IMR-90 (cell line): ENCODE measurements at regions of chr4 and their contacts with region 1.

Region 1: DNA sequence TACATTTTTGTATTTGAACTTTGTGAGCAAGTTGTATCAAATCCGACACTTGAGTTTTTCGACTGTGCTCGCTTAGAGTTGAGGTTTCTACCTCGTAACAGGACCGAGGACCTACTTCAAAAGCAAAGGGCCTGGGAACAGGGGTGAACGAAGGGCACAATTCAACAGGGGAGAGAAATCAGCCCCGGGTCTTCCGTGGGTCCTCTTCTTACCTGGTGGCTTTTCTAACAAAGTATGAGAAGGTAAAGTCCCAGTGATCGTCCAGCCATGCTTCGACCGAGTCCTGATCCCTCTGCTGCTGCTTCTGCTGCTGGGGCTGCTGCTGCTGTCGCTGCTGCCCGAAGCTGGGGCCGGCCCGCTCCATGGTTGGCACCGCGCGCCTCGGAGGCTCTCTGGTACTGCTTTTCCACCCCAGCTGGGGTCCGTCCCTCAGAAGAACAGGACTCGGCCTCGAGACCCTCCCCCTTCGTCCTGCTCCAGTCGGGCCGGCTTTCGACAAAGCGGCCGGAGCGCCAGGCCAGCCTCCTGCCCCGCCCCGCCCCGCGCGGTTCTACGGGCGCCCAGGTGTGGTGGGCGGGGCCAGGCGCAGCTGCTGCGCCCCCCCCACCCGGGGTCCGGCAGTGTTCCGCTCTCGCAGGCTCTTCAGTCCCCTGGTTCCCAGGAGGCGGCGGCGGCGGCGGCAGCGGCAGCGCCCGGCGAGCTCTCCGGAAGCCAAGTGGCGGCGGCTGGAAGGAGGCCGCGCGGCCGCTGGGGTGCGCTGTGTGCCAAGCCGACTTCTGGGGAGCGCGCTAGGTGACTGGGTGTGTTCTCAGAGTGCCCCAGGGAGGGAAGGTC is at the start of gene PDE5A:
- DNase-seq: peak; percentile 80
- ATAC-seq: peak; percentile 56
- H3K4me3 ChIP-seq: peak within 1 kb of the TSS; percentile 93
- H3K27ac ChIP-seq: peak within 1 kb of the TSS; percentile 96
- H3K4me1 ChIP-seq: peaks cover 11% of the 10 kb centered on the region
- H3K27me3 ChIP-seq: no peaks in the 10 kb centered on the region
- CTCF ChIP-seq: peak; percentile 80
- POLR2A ChIP-seq: no peak
- RAD21 ChIP-seq: peak; percentile 90
- total RNA-seq, gene PDE5A: 567 and 770 TPM in 2 replicates

Region 2: DNA sequence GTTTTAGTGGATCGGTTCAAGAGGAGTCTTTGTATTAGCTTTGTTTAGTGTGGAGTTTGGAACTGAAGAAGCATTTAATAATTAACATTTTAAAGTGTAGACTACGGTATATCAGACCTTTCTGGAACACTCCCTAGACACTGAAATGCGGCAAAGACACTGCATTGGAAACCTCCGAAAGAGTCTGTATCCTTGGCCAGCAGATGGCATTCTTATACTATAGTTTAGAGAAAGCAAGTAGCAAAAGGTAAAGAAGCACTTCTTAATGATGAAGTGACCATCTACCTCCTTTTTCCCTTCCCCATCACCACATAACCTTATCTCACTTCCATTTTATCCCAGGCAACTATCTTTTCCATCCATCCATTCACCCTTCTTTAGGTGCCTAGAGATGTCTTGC is 314.2 kb before region 1 on chr4:
- CTCF ChIA-PET with region 1: no interaction called
- POLR2A ChIA-PET with region 1: interaction called, 3 read pairs
- dilution Hi-C with region 1: no loop called
- in situ Hi-C with region 1: loop called (anchors 10 kb)
- intact Hi-C with region 1: loop called (anchors 2 kb)
- DNase-seq: peak; percentile 59
- ATAC-seq: peak; percentile 86
- H3K4me3 ChIP-seq: no peak overlapping the region
- H3K27ac ChIP-seq: no peak overlapping the region
- H3K4me1 ChIP-seq: no peaks in the 10 kb centered on the region
- H3K27me3 ChIP-seq: no peaks in the 10 kb centered on the region
- CTCF ChIP-seq: peak; percentile 63
- POLR2A ChIP-seq: no peak
- RAD21 ChIP-seq: peak; percentile 72

Region 3: GRCh38 chr4:119659616-119660015 is 31.1 kb after region 1 on chr4:
- CTCF ChIA-PET with region 1: interaction called, 8 read pairs
- POLR2A ChIA-PET with region 1: interaction called, 24 read pairs
- dilution Hi-C with region 1: no loop called
- in situ Hi-C with region 1: no loop called
- intact Hi-C with region 1: loop called (anchors 1 kb)
- DNase-seq: peak; percentile 94
- ATAC-seq: peak; percentile 58
- H3K4me3 ChIP-seq: no peak overlapping the region
- H3K27ac ChIP-seq: no peak overlapping the region; the same call in 1 of the 2 replicates
- H3K4me1 ChIP-seq: peaks cover 22% of the 10 kb centered on the region
- H3K27me3 ChIP-seq: no peaks in the 10 kb centered on the region
- CTCF ChIP-seq: no peak
- POLR2A ChIP-seq: no peak
- RAD21 ChIP-seq: no peak

Region 4: GRCh38 chr4:119729835-119730670 is 101.5 kb after region 1 on chr4:
- CTCF ChIA-PET with region 1: interaction called, 19 read pairs
- POLR2A ChIA-PET with region 1: interaction called, 47 read pairs
- dilution Hi-C with region 1: no loop called
- in situ Hi-C with region 1: no loop called
- intact Hi-C with region 1: loop called (anchors 1 kb)
- DNase-seq: peak; percentile 98
- ATAC-seq: peak; percentile 36
- H3K4me3 ChIP-seq: no peak overlapping the region
- H3K27ac ChIP-seq: peak overlapping the region; percentile 98
- H3K4me1 ChIP-seq: peaks cover 42% of the 10 kb centered on the region
- H3K27me3 ChIP-seq: no peaks in the 10 kb centered on the region
- CTCF ChIP-seq: no peak
- POLR2A ChIP-seq: no peak
- RAD21 ChIP-seq: 0 out of 2 replicates have a peak, but pooled peaks have one; percentile 10

Region 5: DNA sequence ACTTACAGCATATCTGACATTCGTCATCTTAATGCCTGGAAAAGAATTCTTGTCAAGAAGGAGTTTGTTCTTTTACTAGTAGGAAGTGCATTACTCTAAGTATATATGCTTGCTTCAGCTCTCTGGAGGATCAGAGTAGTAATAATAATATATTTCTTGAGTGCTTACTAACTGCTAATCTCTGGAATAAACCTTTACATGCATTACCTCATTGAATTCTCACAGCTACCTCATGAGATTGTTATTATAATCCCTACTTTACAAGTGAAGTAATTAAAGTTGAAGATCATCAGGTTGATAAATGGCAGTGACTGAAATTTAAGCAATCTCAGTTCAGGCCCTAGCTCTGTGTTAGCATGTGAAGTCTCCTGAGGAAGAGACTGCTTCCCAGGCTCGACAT is 115.1 kb after region 1 on chr4:
- CTCF ChIA-PET with region 1: no interaction called
- POLR2A ChIA-PET with region 1: no interaction called
- dilution Hi-C with region 1: no loop called
- in situ Hi-C with region 1: no loop called
- intact Hi-C with region 1: no loop called
- DNase-seq: no peak
- ATAC-seq: no peak
- H3K4me3 ChIP-seq: no peak overlapping the region
- H3K27ac ChIP-seq: no peak overlapping the region
- H3K4me1 ChIP-seq: peaks cover 4% of the 10 kb centered on the region
- H3K27me3 ChIP-seq: no peaks in the 10 kb centered on the region
- CTCF ChIP-seq: no peak
- POLR2A ChIP-seq: no peak
- RAD21 ChIP-seq: no peak

Region 6: GRCh38 chr4:119785963-119786362 is 157.4 kb after region 1 on chr4:
- CTCF ChIA-PET with region 1: no interaction called
- POLR2A ChIA-PET with region 1: interaction called, 3 read pairs
- dilution Hi-C with region 1: no loop called
- in situ Hi-C with region 1: no loop called
- intact Hi-C with region 1: loop called (anchors 1 kb)
- DNase-seq: peak; percentile 23
- ATAC-seq: no peak
- H3K4me3 ChIP-seq: no peak overlapping the region
- H3K27ac ChIP-seq: no peak overlapping the region
- H3K4me1 ChIP-seq: no peaks in the 10 kb centered on the region; the same call in 1 of the 2 replicates
- H3K27me3 ChIP-seq: no peaks in the 10 kb centered on the region
- CTCF ChIP-seq: peak; percentile 42
- POLR2A ChIP-seq: no peak
- RAD21 ChIP-seq: peak; percentile 58

Region 7: GRCh38 chr4:119906277-119906676 is 277.8 kb after region 1 on chr4:
- CTCF ChIA-PET with region 1: no interaction called
- POLR2A ChIA-PET with region 1: no interaction called
- dilution Hi-C with region 1: no loop called
- in situ Hi-C with region 1: no loop called
- intact Hi-C with region 1: no loop called
- DNase-seq: no peak
- ATAC-seq: no peak
- H3K4me3 ChIP-seq: no peak overlapping the region
- H3K27ac ChIP-seq: no peak overlapping the region
- H3K4me1 ChIP-seq: no peaks in the 10 kb centered on the region
- H3K27me3 ChIP-seq: no peaks in the 10 kb centered on the region
- CTCF ChIP-seq: no peak
- POLR2A ChIP-seq: no peak
- RAD21 ChIP-seq: no peak

Region 8: GRCh38 chr4:119942806-119943205 is 314.3 kb after region 1 on chr4:
- CTCF ChIA-PET with region 1: no interaction called
- POLR2A ChIA-PET with region 1: no interaction called
- dilution Hi-C with region 1: no loop called
- in situ Hi-C with region 1: no loop called
- intact Hi-C with region 1: loop called (anchors 5 kb)
- DNase-seq: peak; percentile 63
- ATAC-seq: no peak
- H3K4me3 ChIP-seq: no peak overlapping the region
- H3K27ac ChIP-seq: no peak overlapping the region
- H3K4me1 ChIP-seq: peaks cover 12% of the 10 kb centered on the region
- H3K27me3 ChIP-seq: no peaks in the 10 kb centered on the region
- CTCF ChIP-seq: no peak
- POLR2A ChIP-seq: no peak
- RAD21 ChIP-seq: no peak

Region 9: GRCh38 chr4:120007191-120007871 is 378.8 kb after region 1 on chr4:
- CTCF ChIA-PET with region 1: no interaction called
- POLR2A ChIA-PET with region 1: no interaction called
- dilution Hi-C with region 1: no loop called
- in situ Hi-C with region 1: no loop called
- intact Hi-C with region 1: no loop called
- DNase-seq: peak; percentile 90
- ATAC-seq: peak; percentile 74
- H3K4me3 ChIP-seq: no peak overlapping the region
- H3K27ac ChIP-seq: peak overlapping the region; percentile 41; the same call in 1 of the 2 replicates
- H3K4me1 ChIP-seq: peaks cover 10% of the 10 kb centered on the region
- H3K27me3 ChIP-seq: no peaks in the 10 kb centered on the region
- CTCF ChIP-seq: no peak
- POLR2A ChIP-seq: no peak
- RAD21 ChIP-seq: no peak